Activated T-helper 1 cell treated with anti-CD3 and anti-CD28 coated beads, Interleukin-12 subunit alpha, Interleukin-12 subunit beta, Interleukin-2, Interleukin-4 antibody, amounts not matched to agents 30 ng/mL and 10 ng/mL and 1 ng/mL, durations not matched to agents 14 hours and 24 hours and 36 hours (primary cell): ENCODE measurements at regions of chr12 and their contacts with region 1.

Region 1: DNA sequence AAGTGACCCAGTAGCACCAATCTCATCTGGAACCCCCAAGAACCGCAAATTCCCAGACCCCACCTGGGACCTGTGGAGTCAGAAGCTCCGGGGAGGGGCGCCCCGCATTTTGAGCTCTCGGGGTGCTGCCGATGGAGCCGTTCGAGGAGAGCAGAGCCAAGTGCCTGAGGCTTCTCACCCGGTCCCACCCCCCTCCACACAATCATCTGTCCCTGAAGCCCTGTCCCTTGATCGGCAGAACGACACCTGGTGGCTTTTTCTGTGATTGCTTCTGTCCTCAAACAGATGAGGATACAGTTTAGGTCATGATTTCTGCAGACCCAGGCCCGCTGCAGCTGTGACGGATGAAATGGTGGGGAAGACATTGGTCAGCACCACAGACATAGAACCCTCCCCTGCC is 74.7 kb downstream of the NOC4L start:
- DNase-seq: peak; percentile 19
- H3K4me3 Mint-ChIP-seq: no peak overlapping the region
- H3K27ac Mint-ChIP-seq: no peak overlapping the region
- H3K4me1 Mint-ChIP-seq: peaks cover 7% of the 10 kb centered on the region
- H3K27me3 Mint-ChIP-seq: peaks cover 9% of the 10 kb centered on the region

Region 2: DNA sequence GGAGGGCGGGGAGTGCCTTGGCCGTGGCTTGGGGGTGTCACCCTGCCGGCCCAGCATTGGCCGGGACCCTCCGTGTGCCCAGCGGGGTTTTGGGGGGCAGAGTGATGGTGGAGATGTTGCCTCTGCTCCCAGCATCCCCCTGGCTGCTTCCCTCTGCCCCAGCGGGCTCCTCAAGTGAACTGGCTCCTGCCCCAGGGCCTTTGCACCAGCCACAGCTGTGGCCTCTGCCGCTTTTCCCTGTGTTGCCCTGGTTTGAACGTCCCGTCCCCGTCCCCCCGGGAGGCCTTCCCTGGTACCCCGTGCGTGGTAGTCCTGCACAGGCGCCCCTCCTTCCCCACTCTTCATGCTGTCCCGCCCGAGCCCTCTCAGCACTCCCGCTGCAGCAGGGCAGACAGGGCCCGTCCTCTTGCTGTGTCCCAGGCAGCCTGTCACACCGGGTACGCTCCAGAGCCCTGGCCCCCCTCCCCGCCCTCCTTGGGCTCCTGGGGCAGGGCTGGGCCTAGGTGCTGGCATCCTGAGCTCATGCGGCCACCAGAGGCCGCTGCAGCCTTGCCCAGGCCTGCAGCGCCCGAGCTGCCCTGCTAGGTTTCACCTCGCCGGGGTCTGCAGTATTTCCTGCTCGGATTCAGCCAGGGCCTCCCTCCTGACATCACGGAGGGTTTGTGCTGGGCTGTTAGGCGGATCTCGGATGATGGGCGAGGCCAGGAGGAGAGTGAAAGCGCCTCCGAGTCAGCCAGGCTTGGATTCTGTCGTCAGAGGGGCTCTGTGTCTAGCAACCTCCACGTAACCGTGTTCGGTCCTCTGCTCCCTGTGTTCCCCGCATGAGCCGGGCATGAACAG is 65.2 kb before region 1 on chr12:
- intact Hi-C with region 1: loop called (anchors 1 kb)
- DNase-seq: peak; percentile 61
- H3K4me3 Mint-ChIP-seq: no peak overlapping the region
- H3K27ac Mint-ChIP-seq: no peak overlapping the region
- H3K4me1 Mint-ChIP-seq: no peaks in the 10 kb centered on the region
- H3K27me3 Mint-ChIP-seq: no peaks in the 10 kb centered on the region

Region 3: GRCh38 chr12:132489602-132490239 is 270.8 kb after region 1 on chr12 and contains the start of gene FBRSL1:
- intact Hi-C with region 1: no loop called
- DNase-seq: peak; percentile 86
- H3K4me3 Mint-ChIP-seq: peak within 1 kb of the TSS; percentile 87
- H3K27ac Mint-ChIP-seq: peak within 1 kb of the TSS; percentile 90
- H3K4me1 Mint-ChIP-seq: peaks cover 45% of the 10 kb centered on the region
- H3K27me3 Mint-ChIP-seq: peaks cover 1% of the 10 kb centered on the region
- total RNA-seq, gene FBRSL1: 75.8 and 80.2 TPM in 2 replicates